CD14-positive monocyte (primary cell): ENCODE measurements at regions of chr13 and their contacts with region 1.

Region 1: GRCh38 chr13:45047394-45048310 is 58.3 kb downstream of the GPALPP1 start:
- DNase-seq: peak; percentile 46 to 59 (median 57)
- H3K4me3 ChIP-seq: peak overlapping the region in 2 of 3 experiments; percentile 9 to 63
- H3K4me3 Mint-ChIP-seq: peak overlapping the region; percentile 68 to 88
- H3K27ac ChIP-seq: no peak overlapping the region
- H3K27ac Mint-ChIP-seq: peak overlapping the region in 1 of 7 donors; percentile 56
- H3K4me1 ChIP-seq: peaks cover 11 to 16% of the 10 kb centered on the region in 2 donors
- H3K4me1 Mint-ChIP-seq: peaks cover 17% of the 10 kb centered on the region
- H3K27me3 ChIP-seq: no peaks in the 10 kb centered on the region
- H3K27me3 Mint-ChIP-seq: peaks cover 1 to 11% (median 2%) of the 10 kb centered on the region in 3 donors
- CTCF ChIP-seq: peak; percentile 83

Region 2: DNA sequence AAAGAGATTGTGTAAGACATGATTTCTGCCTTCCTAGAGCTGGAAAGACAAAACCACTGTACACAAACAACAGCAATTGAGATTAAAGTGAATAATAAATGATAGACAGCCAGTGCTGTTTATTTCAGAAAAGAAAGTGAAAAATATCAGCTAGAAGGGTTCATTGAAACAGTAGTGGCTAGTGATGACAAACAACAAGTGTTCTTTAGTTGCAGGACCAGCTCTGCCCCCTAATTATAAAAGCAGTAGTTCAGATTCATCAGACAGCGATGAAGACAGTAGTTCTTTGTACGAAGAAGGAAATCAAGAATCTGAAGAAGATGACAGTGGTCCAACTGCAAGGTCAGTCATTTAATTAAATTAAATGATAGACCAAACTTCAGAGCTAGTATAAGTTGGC is 43.6 kb before region 1 on chr13:
- intact Hi-C with region 1: no loop called
- DNase-seq: no peak
- H3K4me3 ChIP-seq: no peak overlapping the region
- H3K4me3 Mint-ChIP-seq: no peak overlapping the region
- H3K27ac ChIP-seq: no peak overlapping the region
- H3K27ac Mint-ChIP-seq: no peak overlapping the region
- H3K4me1 ChIP-seq: no peaks in the 10 kb centered on the region
- H3K4me1 Mint-ChIP-seq: no peaks in the 10 kb centered on the region
- H3K27me3 ChIP-seq: no peaks in the 10 kb centered on the region
- H3K27me3 Mint-ChIP-seq: no peaks in the 10 kb centered on the region
- CTCF ChIP-seq: no peak

Region 3: DNA sequence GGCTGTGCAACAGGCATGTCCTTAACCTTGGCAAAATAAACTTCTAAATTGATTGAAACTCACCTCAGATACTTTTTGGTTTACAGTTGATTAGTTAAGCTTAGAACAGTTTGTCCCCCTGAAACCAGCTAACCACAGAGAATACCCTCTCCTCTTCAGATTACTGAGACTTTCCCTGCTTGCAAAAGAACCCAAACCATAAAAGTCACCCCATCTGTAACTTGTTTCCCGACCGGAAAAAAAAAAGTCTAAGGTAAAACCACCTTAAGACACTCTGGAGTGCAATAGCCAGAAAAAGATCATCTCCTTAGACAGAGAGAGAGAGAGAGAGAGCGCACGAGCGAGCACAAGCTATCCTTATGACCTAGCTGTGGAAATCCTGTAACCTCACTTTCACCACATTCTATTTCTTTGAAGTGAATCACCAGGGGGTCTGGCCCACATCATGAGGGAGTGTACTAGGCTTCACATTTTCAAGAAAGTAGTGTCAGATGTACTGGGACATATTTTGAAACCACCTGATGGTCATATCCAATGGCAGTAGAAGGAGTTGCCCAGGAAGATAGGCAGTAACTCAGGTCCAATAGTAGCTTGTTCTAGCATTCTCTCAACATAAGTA is 61.6 kb after region 1 on chr13:
- intact Hi-C with region 1: no loop called
- DNase-seq: no peak
- H3K4me3 ChIP-seq: peak overlapping the region in 1 of 3 experiments; percentile 30
- H3K4me3 Mint-ChIP-seq: no peak overlapping the region
- H3K27ac ChIP-seq: no peak overlapping the region
- H3K27ac Mint-ChIP-seq: no peak overlapping the region
- H3K4me1 ChIP-seq: no peaks in the 10 kb centered on the region
- H3K4me1 Mint-ChIP-seq: peaks cover 3% of the 10 kb centered on the region
- H3K27me3 ChIP-seq: no peaks in the 10 kb centered on the region
- H3K27me3 Mint-ChIP-seq: peaks cover 0 to 10% (median 7%) of the 10 kb centered on the region in 3 donors
- CTCF ChIP-seq: no peak

Region 4: GRCh38 chr13:45310341-45311125 is 262.9 kb after region 1 on chr13:
- intact Hi-C with region 1: loop called (anchors 2 to 5 kb)
- DNase-seq: no peak
- H3K4me3 ChIP-seq: peak overlapping the region in 1 of 3 experiments; percentile 71
- H3K4me3 Mint-ChIP-seq: peak overlapping the region in 1 of 2 donors; percentile 93
- H3K27ac ChIP-seq: no peak overlapping the region
- H3K27ac Mint-ChIP-seq: no peak overlapping the region
- H3K4me1 ChIP-seq: peaks cover 12 to 13% of the 10 kb centered on the region in 2 donors
- H3K4me1 Mint-ChIP-seq: peaks cover 15% of the 10 kb centered on the region
- H3K27me3 ChIP-seq: peaks cover 6 to 11% of the 10 kb centered on the region in 2 donors
- H3K27me3 Mint-ChIP-seq: peaks cover 18 to 22% (median 22%) of the 10 kb centered on the region in 3 donors
- CTCF ChIP-seq: no peak

Region 5: GRCh38 chr13:45370922-45371406 is 323.3 kb after region 1 on chr13:
- intact Hi-C with region 1: loop called in 1 of 2 experiments (anchors 10 kb)
- DNase-seq: peak; percentile 22 to 58 (median 55)
- H3K4me3 ChIP-seq: peak overlapping the region in 1 of 3 experiments; percentile 28
- H3K4me3 Mint-ChIP-seq: no peak overlapping the region
- H3K27ac ChIP-seq: no peak overlapping the region
- H3K27ac Mint-ChIP-seq: peak overlapping the region in 1 of 7 donors; percentile 33
- H3K4me1 ChIP-seq: peaks cover 11 to 15% of the 10 kb centered on the region in 2 donors
- H3K4me1 Mint-ChIP-seq: peaks cover 35% of the 10 kb centered on the region
- H3K27me3 ChIP-seq: no peaks in the 10 kb centered on the region
- H3K27me3 Mint-ChIP-seq: peaks cover 2 to 9% (median 7%) of the 10 kb centered on the region in 3 donors
- CTCF ChIP-seq: peak; percentile 99